CD8-positive, alpha-beta memory T cell (primary cell): ENCODE measurements at regions of chr4 and their contacts with region 1.

Region 1: DNA sequence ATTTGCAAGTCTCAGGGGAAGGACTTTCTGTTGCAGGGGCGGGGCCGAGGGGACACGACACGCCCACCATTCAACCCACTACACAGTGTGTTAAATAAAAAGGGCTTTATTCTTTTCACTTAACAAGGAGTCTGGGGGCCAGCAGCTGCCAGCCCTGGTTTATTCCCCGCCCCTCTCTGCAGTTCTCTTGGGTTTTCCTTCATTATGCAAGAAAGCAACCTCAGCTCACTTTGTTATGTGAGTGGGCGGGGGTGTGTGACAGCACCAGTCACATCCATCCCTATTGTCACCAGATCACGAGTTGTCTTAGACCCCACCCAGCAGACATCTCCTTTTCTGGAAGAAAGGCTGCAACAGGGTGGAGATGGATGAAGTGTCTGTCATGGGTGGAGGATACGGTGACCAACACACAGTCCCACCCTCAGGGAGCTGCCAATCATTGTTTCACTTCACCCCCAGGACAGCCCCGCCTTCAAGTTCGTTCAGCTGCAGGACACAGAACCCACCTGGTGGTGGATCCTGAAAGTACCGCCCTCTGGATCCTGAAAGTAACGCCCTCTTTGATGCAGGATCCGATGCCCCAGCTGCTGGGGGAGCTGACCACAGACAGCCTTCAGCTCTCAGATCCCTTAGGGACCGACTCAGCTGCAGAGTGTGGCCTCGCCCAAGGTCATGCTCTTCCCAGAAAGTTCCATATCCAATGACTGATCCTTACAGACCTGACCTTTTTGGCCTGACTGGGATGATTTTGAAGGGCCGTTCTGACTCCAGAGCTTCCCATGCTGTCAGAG is 79.6 kb downstream of the SMIM20 start:
- DNase-seq: no peak
- H3K4me3 ChIP-seq: no peak overlapping the region
- H3K4me3 Mint-ChIP-seq: no peak overlapping the region
- H3K27ac ChIP-seq: no peak overlapping the region
- H3K27ac Mint-ChIP-seq: no peak overlapping the region
- H3K4me1 ChIP-seq: no peaks in the 10 kb centered on the region
- H3K4me1 Mint-ChIP-seq: peaks cover 0 to 5% (median 0%) of the 10 kb centered on the region in 3 donors
- H3K27me3 ChIP-seq: no peaks in the 10 kb centered on the region
- H3K27me3 Mint-ChIP-seq: peaks cover 2 to 3% of the 10 kb centered on the region in 2 donors

Region 2: DNA sequence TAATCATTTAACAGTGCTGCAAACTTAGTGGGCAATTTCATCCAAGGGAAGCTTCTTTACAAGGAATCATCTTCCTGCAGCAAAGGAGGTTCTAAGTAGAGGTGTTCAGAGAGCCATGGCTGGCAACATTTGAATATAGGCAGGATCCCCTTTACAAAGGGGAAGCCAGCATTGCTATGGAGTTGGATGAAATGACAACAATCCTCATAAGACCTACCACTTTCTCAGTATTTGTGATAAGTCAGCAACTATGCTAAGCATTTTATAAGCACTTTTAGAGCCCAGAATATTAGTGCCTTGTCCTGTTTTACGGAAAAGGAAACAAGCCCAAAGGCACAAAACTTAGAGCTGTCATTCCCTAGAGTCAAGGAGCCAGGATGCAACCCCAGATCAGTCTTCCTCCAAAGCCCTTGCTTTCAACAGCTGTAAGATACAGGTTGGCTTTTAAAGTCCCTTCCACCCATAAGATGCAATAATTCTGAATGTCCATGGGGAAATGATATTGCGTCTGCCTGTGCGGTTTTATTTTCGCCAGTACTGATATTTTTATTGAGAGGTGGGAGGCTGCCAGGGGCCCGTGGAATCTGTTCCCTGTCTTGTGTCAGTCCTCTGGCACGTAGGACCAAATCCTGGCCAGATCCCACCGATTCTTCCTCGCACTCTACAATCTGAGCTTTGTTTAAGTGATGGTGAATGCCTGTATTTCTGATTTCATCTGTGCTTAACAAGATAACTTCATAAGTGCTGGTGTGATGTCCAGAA is 20.4 kb before region 1 on chr4:
- CTCF ChIA-PET with region 1: interaction called, 13 read pairs
- POLR2A ChIA-PET with region 1: no interaction called
- DNase-seq: no peak
- H3K4me3 ChIP-seq: no peak overlapping the region
- H3K4me3 Mint-ChIP-seq: no peak overlapping the region
- H3K27ac ChIP-seq: no peak overlapping the region
- H3K27ac Mint-ChIP-seq: peak overlapping the region in 1 of 8 donors; percentile 2
- H3K4me1 ChIP-seq: no peaks in the 10 kb centered on the region
- H3K4me1 Mint-ChIP-seq: no peaks in the 10 kb centered on the region
- H3K27me3 ChIP-seq: no peaks in the 10 kb centered on the region
- H3K27me3 Mint-ChIP-seq: peaks cover 0 to 16% of the 10 kb centered on the region in 2 donors

Region 3: GRCh38 chr4:26005764-26006163 is 12.2 kb after region 1 on chr4:
- CTCF ChIA-PET with region 1: interaction called, 11 read pairs
- POLR2A ChIA-PET with region 1: no interaction called
- DNase-seq: no peak
- H3K4me3 ChIP-seq: no peak overlapping the region
- H3K4me3 Mint-ChIP-seq: no peak overlapping the region
- H3K27ac ChIP-seq: no peak overlapping the region
- H3K27ac Mint-ChIP-seq: no peak overlapping the region
- H3K4me1 ChIP-seq: no peaks in the 10 kb centered on the region
- H3K4me1 Mint-ChIP-seq: no peaks in the 10 kb centered on the region
- H3K27me3 ChIP-seq: no peaks in the 10 kb centered on the region
- H3K27me3 Mint-ChIP-seq: peaks cover 2 to 11% of the 10 kb centered on the region in 2 donors